Left lung (tissue), 14 donors: ENCODE measurements at regions of chr16 and their contacts with region 1.

Region 1: DNA sequence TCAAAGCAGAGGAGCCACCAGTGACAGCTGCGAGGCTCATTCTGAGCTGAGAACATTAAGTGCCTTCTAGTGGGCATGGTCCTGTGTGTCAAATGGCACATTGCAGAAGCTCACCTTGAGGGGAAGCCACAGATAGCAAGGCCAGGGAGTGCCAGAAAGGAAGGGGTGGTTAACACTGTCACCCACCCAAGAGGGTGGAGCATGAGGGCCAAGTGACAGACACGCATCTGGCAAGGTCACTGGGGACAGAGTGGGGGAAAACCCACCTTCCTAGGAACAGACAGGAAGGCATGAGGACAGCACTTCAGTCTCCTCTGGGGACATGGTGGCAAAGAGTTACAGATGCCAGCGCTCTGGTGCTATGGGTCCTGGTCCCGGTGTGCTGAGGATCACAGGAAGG is 22.1 kb downstream of the NUBP1 start:
- DNase-seq: no peak
- ATAC-seq: no peak
- H3K4me3 ChIP-seq: no peak overlapping the region
- H3K27ac ChIP-seq: no peak overlapping the region
- H3K4me1 ChIP-seq: peaks cover 0 to 27% of the 10 kb centered on the region in 2 donors
- H3K27me3 ChIP-seq: no peaks in the 10 kb centered on the region
- CTCF ChIP-seq: no peak

Region 2: GRCh38 chr16:10918294-10919002 is 152.7 kb after region 1 on chr16:
- intact Hi-C with region 1: loop called in 1 of 2 experiments (anchors 10 kb)
- DNase-seq: peak in 3 of 4 donors; percentile 81 to 94 (median 92)
- ATAC-seq: peak; percentile 93
- H3K4me3 ChIP-seq: no peak overlapping the region
- H3K27ac ChIP-seq: peak overlapping the region in 1 of 2 donors; percentile 17
- H3K4me1 ChIP-seq: peaks cover 16 to 39% of the 10 kb centered on the region in 2 donors
- H3K27me3 ChIP-seq: no peaks in the 10 kb centered on the region
- CTCF ChIP-seq: peak; percentile 92 to 95